Activated naive CD4-positive, alpha-beta T cell treated with anti-CD3 and anti-CD28 coated beads for 36 hours (primary cell): ENCODE measurements at regions of chr1 and their contacts with region 1.

Region 1: DNA sequence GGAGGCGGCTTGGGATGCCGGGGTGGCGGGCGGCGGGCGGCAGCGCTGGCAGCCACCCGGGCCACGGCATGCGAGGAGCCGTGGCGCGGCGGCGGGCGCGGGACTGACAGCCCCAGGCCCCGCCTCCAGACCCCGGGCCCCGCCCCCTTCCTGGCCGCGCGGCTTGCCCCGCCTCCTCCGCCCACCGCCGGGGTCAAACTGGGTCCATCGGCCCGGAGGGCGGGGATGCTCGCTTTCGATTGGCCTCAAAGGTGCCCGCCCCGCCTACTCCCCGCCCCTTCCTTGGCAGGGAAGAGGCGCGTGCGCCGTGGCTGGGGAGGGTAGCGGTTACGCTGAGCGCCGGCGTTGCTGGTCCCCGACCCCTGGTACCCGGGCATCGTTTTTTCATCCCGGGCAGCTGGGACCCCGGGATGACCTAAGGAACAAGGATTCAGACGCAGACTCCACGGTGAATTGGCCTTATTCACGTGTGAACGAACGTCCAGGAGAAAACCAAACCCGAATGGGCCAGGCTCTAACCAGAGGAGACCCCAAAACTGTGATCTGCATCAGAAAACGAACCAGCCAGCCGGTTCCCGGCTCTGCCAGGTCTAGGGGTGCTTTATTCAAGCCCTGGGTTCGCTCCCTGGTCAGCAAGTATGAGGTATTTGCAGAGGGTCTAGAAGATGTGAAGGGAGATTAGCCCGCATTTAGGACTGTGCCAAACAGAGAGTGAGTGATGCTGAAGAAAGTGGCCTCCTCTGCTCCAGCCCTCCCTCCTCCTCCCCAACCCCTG is 117.2 kb upstream of the GUCA2B start:
- DNase-seq: peak; percentile 99
- H3K4me3 Mint-ChIP-seq: peak overlapping the region; percentile 79
- H3K27ac Mint-ChIP-seq: peak overlapping the region; percentile 59
- H3K4me1 Mint-ChIP-seq: peaks cover 32% of the 10 kb centered on the region
- H3K27me3 Mint-ChIP-seq: no peaks in the 10 kb centered on the region

Region 2: GRCh38 chr1:41573785-41574713 is 462.0 kb before region 1 on chr1:
- CTCF ChIA-PET with region 1: no interaction called
- intact Hi-C with region 1: loop called (anchors 5 kb)
- DNase-seq: peak; percentile 92
- H3K4me3 Mint-ChIP-seq: no peak overlapping the region
- H3K27ac Mint-ChIP-seq: peak overlapping the region; percentile 20
- H3K4me1 Mint-ChIP-seq: peaks cover 42% of the 10 kb centered on the region
- H3K27me3 Mint-ChIP-seq: no peaks in the 10 kb centered on the region

Region 3: GRCh38 chr1:41739061-41739955 is 296.7 kb before region 1 on chr1:
- CTCF ChIA-PET with region 1: no interaction called
- intact Hi-C with region 1: loop called (anchors 5 kb)
- DNase-seq: peak; percentile 96
- H3K4me3 Mint-ChIP-seq: peak overlapping the region; percentile 73
- H3K27ac Mint-ChIP-seq: peak overlapping the region; percentile 98
- H3K4me1 Mint-ChIP-seq: peaks cover 93% of the 10 kb centered on the region
- H3K27me3 Mint-ChIP-seq: no peaks in the 10 kb centered on the region

Region 4: DNA sequence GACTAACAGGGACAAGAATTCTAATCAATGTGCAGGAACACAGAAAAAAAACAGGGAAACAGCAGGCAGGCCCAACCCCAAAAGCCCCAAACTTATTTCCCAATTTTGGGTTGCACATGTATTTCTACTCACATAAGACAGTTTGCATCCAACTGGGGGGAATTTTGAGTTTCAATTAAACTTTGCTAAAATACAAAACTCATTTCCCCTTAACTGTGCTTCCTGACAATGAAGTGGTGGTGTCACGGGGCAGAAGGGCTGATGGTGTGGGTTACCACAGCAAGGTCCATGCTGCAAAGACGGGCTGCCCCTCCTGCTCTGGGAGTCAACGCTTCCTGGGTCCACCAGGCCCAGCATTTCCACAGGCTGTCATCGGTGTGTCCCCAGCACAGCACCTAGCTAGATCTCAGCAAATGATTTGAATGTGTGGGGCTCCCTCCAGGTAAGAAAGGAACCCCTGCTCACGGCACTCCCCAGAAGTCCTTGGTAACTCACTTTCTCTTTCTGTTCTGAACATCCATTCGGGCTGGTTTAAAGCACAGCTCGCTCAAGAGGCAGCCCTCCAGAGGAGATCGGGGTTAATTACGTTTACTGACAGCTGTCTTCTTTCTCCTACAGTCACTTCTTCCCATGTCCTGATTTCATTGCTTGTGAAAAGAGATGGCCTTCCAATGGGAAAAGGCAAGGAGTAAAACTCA is 144.7 kb before region 1 on chr1:
- CTCF ChIA-PET with region 1: no interaction called
- intact Hi-C with region 1: loop called (anchors 2 kb)
- DNase-seq: peak; percentile 71
- H3K4me3 Mint-ChIP-seq: peak overlapping the region; percentile 69
- H3K27ac Mint-ChIP-seq: peak overlapping the region; percentile 68
- H3K4me1 Mint-ChIP-seq: peaks cover 45% of the 10 kb centered on the region
- H3K27me3 Mint-ChIP-seq: no peaks in the 10 kb centered on the region

Region 5: DNA sequence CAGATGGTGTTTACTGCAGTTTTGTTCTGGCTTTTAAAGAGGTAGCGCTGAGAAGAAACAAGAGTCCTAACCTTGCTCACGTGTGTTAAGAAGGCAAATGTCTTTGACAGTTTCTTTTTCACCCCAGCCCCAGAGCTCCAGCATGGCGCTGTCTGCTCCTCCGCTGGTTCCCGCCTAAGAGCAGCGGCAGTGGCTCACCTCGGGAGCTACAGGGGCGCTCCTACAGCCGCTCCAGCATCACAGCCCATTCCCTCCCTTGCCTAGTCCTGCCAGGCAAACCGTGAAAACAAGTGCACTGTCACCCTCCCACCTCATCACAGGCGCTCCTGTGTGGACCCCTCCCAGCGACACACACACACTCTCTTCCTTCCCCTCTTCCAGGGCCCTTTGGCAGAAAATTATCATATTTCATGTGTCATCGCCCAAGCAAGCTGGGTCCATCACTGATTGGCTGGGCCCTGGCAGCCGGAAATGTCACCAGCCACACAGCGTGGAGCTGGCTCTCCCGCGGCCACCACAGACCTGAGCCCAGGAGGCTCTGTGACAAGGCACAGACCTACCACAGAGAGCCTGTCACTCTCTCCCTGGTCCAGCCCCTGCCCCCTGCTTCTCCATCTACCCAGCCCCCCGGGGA is 116.1 kb before region 1 on chr1:
- CTCF ChIA-PET with region 1: interaction called, 3 read pairs
- intact Hi-C with region 1: loop called (anchors 1 kb)
- DNase-seq: peak; percentile 91
- H3K4me3 Mint-ChIP-seq: peak overlapping the region; percentile 89
- H3K27ac Mint-ChIP-seq: peak overlapping the region; percentile 91
- H3K4me1 Mint-ChIP-seq: peaks cover 49% of the 10 kb centered on the region
- H3K27me3 Mint-ChIP-seq: no peaks in the 10 kb centered on the region

Region 6: DNA sequence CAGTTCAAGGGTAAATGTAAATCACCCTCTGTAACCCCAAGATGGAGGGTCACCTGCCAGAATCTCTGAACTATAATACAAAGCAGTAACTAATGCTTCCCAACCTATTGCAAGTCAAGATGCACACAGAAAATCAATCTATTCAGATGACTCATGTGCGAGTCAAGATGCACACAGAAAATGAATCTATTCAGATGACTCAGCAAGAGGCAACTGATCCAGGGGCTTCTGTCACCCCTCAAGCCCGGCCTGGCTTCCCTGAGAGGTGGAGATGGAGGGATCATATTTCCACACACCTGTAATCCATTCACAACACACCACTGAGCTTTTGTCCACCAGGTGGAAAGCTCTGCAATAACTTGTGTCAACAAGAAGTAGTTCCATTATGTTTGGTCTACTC is 99.9 kb before region 1 on chr1:
- CTCF ChIA-PET with region 1: interaction called, 3 read pairs
- intact Hi-C with region 1: loop called (anchors 5 kb)
- DNase-seq: peak; percentile 55
- H3K4me3 Mint-ChIP-seq: no peak overlapping the region
- H3K27ac Mint-ChIP-seq: no peak overlapping the region
- H3K4me1 Mint-ChIP-seq: peaks cover 40% of the 10 kb centered on the region
- H3K27me3 Mint-ChIP-seq: no peaks in the 10 kb centered on the region

Region 7: DNA sequence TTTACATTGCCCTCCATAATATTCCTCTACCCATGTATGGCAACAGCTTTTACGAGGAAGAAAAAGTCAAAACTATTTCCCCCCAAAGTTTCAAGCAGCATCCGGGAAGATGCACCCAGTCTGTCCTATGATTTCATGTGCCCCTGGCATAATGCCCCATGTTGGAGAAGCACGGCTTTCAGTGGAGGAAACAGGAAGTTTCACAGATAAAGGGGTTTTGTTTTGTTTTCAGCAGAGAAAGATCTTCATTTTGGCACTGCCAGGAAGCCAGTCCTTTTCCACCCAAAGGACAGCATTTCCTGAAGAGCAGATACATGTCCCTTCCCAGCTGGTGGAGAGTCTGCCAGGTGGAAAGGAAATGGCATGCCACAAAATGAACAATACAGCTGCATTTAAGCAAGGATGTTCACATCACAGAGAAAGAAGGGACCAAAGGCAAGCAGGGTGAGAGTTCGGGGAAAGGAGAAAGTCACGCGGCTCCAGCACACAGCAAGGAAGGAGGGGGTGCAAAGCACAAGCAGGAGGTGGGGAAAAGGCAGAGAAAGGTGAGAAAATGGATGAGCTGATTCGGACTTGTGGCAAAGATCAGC is 22.0 kb before region 1 on chr1:
- CTCF ChIA-PET with region 1: no interaction called
- intact Hi-C with region 1: loop called (anchors 2 kb)
- DNase-seq: peak; percentile 17
- H3K4me3 Mint-ChIP-seq: peak overlapping the region; percentile 44
- H3K27ac Mint-ChIP-seq: no peak overlapping the region
- H3K4me1 Mint-ChIP-seq: peaks cover 50% of the 10 kb centered on the region
- H3K27me3 Mint-ChIP-seq: no peaks in the 10 kb centered on the region